Pancreas (tissue), 10 donors: ENCODE measurements at regions of chrX and their contacts with region 1.

Region 1: DNA sequence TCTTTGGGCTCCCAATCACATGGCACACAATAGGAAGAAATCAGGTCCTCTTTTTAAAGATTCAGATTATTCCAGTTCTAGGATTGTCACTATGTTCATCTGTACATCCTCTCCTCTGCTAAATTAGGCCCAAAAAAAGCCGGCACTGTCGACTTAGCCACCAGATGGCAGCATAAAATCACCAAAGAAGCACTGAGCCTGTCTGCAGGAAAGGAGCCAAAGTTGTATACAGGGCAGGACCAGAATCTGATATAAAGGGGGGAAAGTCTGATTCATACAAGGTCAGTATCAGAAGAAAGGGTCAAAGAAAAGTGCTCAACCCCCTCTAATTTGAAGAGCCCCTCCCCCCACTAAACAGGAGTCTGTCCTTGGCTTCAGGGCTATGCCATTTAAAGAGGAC is 292.5 kb downstream of the CHIC1 start:
- DNase-seq: peak in 4 of 6 donors; percentile 7 to 78 (median 52)
- ATAC-seq: peak in 2 of 4 donors; percentile 36
- H3K4me3 ChIP-seq: no peak overlapping the region
- H3K27ac ChIP-seq: no peak overlapping the region
- H3K4me1 ChIP-seq: no peaks in the 10 kb centered on the region
- H3K27me3 ChIP-seq: no peaks in the 10 kb centered on the region
- CTCF ChIP-seq: peak; percentile 48 to 63 (median 54)

Region 2: GRCh38 chrX:73799888-73800287 is 55.7 kb before region 1 on chrX:
- intact Hi-C with region 1: no loop called
- DNase-seq: no peak
- ATAC-seq: no peak
- H3K4me3 ChIP-seq: no peak overlapping the region
- H3K27ac ChIP-seq: no peak overlapping the region
- H3K4me1 ChIP-seq: no peaks in the 10 kb centered on the region
- H3K27me3 ChIP-seq: no peaks in the 10 kb centered on the region
- CTCF ChIP-seq: no peak

Region 3: DNA sequence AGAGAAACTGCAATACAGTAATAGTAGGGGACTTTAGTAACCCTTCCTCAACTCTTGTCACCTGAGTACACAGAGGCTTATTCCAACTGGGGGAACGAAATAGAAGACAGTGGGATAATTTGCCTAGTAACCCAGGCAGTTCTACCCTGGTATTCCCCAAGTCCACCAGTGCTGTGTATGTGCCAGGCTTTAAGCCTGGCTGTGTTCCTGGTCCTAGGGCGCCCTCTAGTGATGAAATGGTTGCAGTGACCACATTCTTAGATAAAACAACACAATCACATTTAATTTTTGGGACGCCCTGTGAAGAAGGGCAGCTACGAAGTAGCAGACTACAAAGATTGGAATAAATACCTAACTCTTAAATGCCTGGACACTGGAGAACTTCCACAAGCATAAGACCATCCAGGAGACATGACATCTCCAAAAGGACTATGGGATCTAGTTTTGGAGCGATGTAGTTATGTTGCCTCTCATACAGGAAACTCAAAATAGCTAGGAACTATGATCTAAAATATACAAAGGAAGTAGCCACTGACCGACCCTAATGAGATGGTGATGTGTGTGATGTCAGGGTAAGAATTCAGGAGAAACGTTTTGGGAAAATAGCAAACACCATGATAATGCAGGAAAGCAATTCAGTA is 160.0 kb after region 1 on chrX:
- intact Hi-C with region 1: loop called in 2 of 3 experiments (anchors 5 to 10 kb)
- DNase-seq: peak in 5 of 6 donors; percentile 17 to 75 (median 56)
- ATAC-seq: peak; percentile 87 to 99 (median 95)
- H3K4me3 ChIP-seq: no peak overlapping the region
- H3K27ac ChIP-seq: no peak overlapping the region
- H3K4me1 ChIP-seq: no peaks in the 10 kb centered on the region
- H3K27me3 ChIP-seq: no peaks in the 10 kb centered on the region
- CTCF ChIP-seq: peak; percentile 66 to 86 (median 70)

Region 4: DNA sequence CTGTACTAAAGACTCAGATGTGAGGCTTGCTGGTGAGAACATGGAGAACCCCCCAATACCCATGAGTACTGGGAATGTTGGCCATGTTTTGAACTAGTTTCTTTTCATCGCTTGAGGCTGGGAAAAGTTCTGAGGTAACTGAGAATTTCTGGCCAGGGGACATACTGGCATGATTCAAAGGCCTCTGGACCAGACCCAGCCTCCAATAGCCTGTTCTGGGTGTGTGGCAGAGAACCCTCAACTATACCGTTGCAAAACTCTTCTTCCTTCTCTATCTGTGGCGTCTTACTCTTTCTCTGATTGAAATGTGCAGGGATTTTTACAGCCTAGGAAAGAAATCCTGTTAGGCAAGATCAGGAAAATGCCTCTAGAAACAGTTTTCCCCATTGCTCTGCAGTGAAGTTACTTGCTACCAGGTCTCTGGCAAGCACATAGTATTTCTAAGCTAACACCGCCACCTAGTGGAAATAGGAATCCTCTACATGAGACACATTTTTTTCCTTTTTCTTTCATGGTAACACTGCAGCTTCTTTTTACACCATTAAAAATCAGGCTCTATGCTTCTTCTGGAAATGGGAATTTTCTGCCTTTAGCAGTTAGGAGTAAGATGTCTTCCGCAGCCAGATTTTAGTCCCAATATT is 277.7 kb after region 1 on chrX:
- intact Hi-C with region 1: loop called in 2 of 3 experiments (anchors 5 kb)
- DNase-seq: peak in 2 of 6 donors; percentile 22 to 25
- ATAC-seq: peak; percentile 48 to 90 (median 88)
- H3K4me3 ChIP-seq: no peak overlapping the region
- H3K27ac ChIP-seq: no peak overlapping the region
- H3K4me1 ChIP-seq: no peaks in the 10 kb centered on the region
- H3K27me3 ChIP-seq: no peaks in the 10 kb centered on the region
- CTCF ChIP-seq: peak; percentile 50 to 76 (median 70)